ENCODE measurements at regions of chr12 and their contacts with region 1.

Region 1: DNA sequence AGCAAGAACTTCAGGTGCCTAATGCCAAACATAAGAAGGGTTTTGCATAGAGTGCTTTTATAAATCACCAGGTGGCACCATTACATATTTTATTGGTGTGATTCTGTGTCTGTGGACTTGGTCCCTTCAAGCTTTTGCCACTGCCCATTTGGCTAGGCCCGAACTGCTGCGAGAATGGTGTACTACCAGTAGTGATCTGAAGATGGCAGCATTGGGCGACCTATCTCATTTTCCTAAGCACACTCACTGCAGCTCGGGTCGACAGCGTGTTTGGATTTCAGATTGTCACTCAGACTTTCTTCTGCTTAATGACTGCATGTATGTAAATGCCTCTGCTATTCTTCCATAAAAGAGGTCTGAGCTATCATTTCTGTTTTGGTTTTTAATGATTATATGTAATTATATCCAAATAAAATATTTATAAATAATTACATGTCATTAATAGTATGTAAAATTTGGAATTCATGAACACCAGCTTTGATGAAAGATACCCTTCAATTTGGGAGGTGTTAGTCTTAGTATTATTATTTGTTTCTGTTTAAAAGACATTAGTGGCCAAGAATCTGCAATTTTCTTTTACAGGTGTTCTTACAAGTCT is 78.5 kb downstream of the TPH2 start:
- DNase-seq: peak in 4 of 5 donors; percentile 37 to 60 (median 48)
- ATAC-seq: peak in 3 of 4 donors; percentile 79 to 91 (median 84)
- H3K4me3 ChIP-seq: no peak overlapping the region
- H3K27ac ChIP-seq: no peak overlapping the region
- H3K4me1 ChIP-seq: peaks cover 0 to 9% (median 0%) of the 10 kb centered on the region in 12 donors
- H3K27me3 ChIP-seq: peaks cover 0 to 12% (median 0%) of the 10 kb centered on the region in 9 donors
- CTCF ChIP-seq: peak; percentile 61 to 84 (median 76)
- POLR2A ChIP-seq: no peak

Region 2: DNA sequence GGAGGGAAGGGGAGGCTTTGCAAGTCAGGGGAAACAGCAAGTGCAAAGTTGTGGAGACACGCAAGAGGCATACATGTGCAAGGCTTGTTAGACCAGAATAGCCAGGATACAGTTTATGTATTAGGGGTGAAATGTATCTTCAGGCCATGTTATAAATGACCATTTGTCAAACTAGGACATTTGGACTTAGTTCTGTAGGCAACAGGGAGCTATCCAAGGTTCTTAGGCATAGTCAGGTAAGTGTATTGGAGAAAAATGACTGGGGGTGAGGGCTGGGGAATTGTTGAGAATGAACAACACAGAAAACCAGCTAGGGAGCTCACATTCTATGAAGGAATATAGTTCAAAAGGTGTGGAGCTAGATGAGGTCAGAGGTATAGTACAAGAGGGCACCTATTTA is 36.0 kb before region 1 on chr12:
- intact Hi-C with region 1: no loop called
- DNase-seq: no peak
- ATAC-seq: no peak
- H3K4me3 ChIP-seq: no peak overlapping the region
- H3K27ac ChIP-seq: no peak overlapping the region
- H3K4me1 ChIP-seq: no peaks in the 10 kb centered on the region
- H3K27me3 ChIP-seq: no peaks in the 10 kb centered on the region
- CTCF ChIP-seq: no peak
- POLR2A ChIP-seq: no peak

Region 3: DNA sequence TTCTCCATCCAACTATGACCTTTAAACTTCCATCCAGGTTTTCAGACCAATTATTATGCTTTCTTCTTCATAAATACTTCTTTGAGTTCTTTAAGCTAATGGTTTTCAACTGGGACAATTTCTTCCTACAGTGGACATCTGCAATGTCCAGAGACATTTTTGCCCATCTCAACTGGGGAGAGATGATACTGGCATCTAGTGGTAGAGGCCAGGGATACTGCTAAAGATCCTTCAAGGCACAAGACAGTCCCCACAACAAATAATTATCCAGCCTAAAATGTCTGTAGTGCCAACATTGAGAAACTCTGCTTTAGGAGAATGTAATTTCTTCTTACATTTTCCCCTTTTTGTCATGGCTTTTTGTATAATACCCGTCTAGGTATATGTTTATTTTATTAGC is 265.6 kb after region 1 on chr12:
- intact Hi-C with region 1: loop called in 1 of 10 experiments (anchors 10 kb)
- DNase-seq: no peak
- ATAC-seq: no peak
- H3K4me3 ChIP-seq: no peak overlapping the region
- H3K27ac ChIP-seq: no peak overlapping the region
- H3K4me1 ChIP-seq: no peaks in the 10 kb centered on the region
- H3K27me3 ChIP-seq: peaks cover 0 to 28% (median 0%) of the 10 kb centered on the region in 9 donors
- CTCF ChIP-seq: peak in 3 of 12 donors; percentile 9 to 32 (median 23)
- POLR2A ChIP-seq: no peak